CD4-positive, alpha-beta memory T cell (primary cell): ENCODE measurements at regions of chr22 and their contacts with region 1.

Region 1: DNA sequence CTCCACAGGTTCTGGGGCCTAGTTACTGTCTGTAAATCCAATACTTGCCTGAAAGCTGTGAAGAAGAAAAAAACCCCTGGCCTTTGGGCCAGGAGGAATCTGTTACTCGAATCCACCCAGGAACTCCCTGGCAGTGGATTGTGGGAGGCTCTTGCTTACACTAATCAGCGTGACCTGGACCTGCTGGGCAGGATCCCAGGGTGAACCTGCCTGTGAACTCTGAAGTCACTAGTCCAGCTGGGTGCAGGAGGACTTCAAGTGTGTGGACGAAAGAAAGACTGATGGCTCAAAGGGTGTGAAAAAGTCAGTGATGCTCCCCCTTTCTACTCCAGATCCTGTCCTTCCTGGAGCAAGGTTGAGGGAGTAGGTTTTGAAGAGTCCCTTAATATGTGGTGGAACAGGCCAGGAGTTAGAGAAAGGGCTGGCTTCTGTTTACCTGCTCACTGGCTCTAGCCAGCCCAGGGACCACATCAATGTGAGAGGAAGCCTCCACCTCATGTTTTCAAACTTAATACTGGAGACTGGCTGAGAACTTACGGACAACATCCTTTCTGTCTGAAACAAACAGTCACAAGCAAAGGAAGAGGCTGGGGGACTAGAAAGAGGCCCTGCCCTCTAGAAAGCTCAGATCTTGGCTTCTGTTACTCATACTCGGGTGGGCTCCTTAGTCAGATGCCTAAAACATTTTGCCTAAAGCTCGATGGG is 13.5 kb downstream of the PIK3IP1 start:
- DNase-seq: peak; percentile 64 to 76 (median 73)
- H3K4me3 ChIP-seq: peak overlapping the region in 1 of 2 donors; percentile 17
- H3K4me3 Mint-ChIP-seq: peak overlapping the region; percentile 38 to 84 (median 77)
- H3K27ac ChIP-seq: peak overlapping the region; percentile 43
- H3K27ac Mint-ChIP-seq: peak overlapping the region; percentile 94 to 99 (median 97)
- H3K4me1 ChIP-seq: peaks cover 87% of the 10 kb centered on the region
- H3K4me1 Mint-ChIP-seq: peaks cover 57 to 92% (median 73%) of the 10 kb centered on the region in 4 donors
- H3K27me3 ChIP-seq: no peaks in the 10 kb centered on the region
- H3K27me3 Mint-ChIP-seq: no peaks in the 10 kb centered on the region

Region 2: DNA sequence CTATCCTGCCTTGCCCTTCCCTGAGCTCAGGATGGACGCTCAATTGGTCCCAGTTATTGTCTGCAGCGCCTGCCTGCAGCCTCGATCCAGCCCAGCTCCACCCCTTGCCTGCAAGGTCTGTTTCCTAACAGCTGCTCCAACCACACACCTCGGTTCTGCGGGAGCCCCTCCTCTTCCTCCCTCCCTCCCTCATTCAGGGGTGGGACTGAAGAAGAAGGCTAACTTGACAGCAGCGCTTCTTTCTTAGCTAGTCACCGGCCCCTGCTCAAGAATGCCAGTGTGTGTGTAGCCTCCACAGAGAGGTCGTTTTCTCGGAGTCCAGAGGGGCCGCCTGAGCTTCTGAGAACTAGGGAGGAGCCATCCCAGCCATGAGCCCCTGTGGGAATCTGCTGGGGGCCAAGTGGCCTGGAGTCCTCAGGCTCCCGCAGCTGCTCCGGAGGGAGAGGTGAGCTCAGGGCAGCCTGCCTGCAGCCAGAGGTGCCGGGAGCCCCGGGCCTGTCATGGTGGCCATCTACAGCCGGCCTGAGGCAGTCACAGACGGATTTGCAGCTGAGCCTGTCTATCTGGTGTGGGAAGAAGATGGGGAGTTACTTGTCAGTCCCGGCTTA is 30.5 kb before region 1 on chr22:
- CTCF ChIA-PET with region 1: interaction called, 71 read pairs
- POLR2A ChIA-PET with region 1: interaction called, 26 read pairs
- intact Hi-C with region 1: no loop called
- DNase-seq: peak; percentile 61 to 81 (median 69)
- H3K4me3 ChIP-seq: no peak overlapping the region
- H3K4me3 Mint-ChIP-seq: peak overlapping the region; percentile 22 to 85 (median 78)
- H3K27ac ChIP-seq: no peak overlapping the region
- H3K27ac Mint-ChIP-seq: peak overlapping the region in 6 of 7 donors; percentile 61 to 87 (median 78)
- H3K4me1 ChIP-seq: peaks cover 42% of the 10 kb centered on the region
- H3K4me1 Mint-ChIP-seq: peaks cover 22 to 50% (median 27%) of the 10 kb centered on the region in 4 donors
- H3K27me3 ChIP-seq: no peaks in the 10 kb centered on the region
- H3K27me3 Mint-ChIP-seq: no peaks in the 10 kb centered on the region

Region 3: DNA sequence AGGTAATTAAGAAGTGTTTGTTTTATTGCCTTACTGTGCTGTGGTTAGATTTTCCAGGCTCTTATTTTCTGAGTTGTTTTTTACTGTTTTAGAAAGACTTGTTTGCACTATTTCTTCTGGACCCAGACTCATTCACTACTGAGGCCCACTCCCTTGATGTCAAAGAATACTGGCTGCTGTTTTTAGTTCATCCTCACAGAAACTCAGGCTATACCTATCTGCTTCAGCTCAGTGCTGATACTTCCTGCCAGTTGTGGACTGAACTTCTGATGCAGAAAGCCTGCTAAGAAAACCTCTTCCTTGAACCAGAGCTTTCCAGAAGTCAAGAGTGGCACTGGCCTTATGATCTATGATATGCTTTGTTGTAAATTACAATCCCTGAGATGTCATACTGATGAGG is 29.4 kb after region 1 on chr22:
- CTCF ChIA-PET with region 1: interaction called, 114 read pairs
- POLR2A ChIA-PET with region 1: interaction called, 1,203 read pairs
- intact Hi-C with region 1: loop called (anchors 1 kb)
- DNase-seq: no peak
- H3K4me3 ChIP-seq: no peak overlapping the region
- H3K4me3 Mint-ChIP-seq: peak overlapping the region in 6 of 8 donors; percentile 46 to 77 (median 57)
- H3K27ac ChIP-seq: no peak overlapping the region
- H3K27ac Mint-ChIP-seq: peak overlapping the region; percentile 5 to 83 (median 65)
- H3K4me1 ChIP-seq: peaks cover 44% of the 10 kb centered on the region
- H3K4me1 Mint-ChIP-seq: peaks cover 20 to 48% (median 35%) of the 10 kb centered on the region in 4 donors
- H3K27me3 ChIP-seq: no peaks in the 10 kb centered on the region
- H3K27me3 Mint-ChIP-seq: no peaks in the 10 kb centered on the region

Region 4: DNA sequence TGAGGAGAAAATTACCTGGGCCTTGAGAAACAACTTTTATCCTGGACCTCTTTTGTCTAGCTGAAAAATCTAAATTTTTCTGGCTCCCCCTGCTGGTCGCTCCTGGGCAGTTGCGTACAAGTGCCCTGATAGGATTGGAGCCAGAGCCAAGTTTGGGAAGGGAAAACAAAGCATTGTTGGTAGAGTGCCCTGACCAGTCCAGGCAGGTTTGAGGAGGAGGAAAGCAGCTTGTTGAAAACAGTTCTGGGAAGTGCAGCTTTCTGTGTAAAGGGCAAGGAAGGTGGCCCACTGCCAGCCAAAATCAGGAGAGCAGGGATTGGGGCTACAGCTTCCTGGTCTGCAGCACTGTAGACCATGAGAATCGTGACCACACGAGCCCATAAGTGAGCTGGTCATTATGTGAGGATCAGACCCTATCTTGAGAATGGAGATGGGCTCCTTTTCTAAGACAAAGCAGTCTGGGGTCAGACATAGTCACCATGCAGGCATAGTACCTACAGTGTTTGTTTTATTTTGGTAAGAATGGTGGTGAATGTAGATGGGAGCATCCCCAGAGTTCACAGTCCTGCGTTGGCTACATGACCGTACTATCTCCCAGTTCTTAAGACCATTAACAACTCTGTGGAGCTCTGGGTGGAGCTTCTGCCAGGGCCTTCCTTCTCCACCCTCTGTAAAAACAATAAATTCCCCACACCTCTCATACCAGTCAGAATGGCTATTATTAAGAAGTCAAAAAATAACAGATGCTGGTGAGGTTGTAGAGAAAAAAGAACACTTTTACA is 34.8 kb after region 1 on chr22:
- CTCF ChIA-PET with region 1: interaction called, 114 read pairs
- POLR2A ChIA-PET with region 1: interaction called, 76 read pairs
- intact Hi-C with region 1: loop called (anchors 1 kb)
- DNase-seq: peak; percentile 58 to 68 (median 60)
- H3K4me3 ChIP-seq: no peak overlapping the region
- H3K4me3 Mint-ChIP-seq: peak overlapping the region in 1 of 8 donors; percentile 10
- H3K27ac ChIP-seq: no peak overlapping the region
- H3K27ac Mint-ChIP-seq: peak overlapping the region in 5 of 7 donors; percentile 37 to 91 (median 78)
- H3K4me1 ChIP-seq: peaks cover 25% of the 10 kb centered on the region
- H3K4me1 Mint-ChIP-seq: peaks cover 6 to 20% (median 14%) of the 10 kb centered on the region in 4 donors
- H3K27me3 ChIP-seq: no peaks in the 10 kb centered on the region
- H3K27me3 Mint-ChIP-seq: no peaks in the 10 kb centered on the region

Region 5: DNA sequence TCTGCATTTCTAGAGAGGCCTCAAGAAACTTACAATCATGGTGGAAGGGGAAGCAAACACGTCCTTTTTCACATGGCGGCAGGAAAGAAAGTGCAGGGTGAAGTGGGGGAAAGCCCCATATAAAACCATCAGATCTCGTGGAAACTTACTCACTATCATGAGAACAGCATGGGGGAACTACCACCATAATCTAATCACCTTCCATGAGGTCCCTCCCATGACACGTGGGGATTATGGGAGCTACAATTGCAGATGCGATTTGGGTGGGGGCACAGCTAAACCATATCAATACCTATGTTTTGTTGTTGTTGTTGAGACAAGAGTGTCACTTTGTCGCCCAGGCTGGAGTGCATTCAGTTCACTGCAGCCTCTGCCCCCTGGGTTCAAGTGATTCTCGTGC is 247.5 kb after region 1 on chr22:
- CTCF ChIA-PET with region 1: no interaction called
- POLR2A ChIA-PET with region 1: no interaction called
- intact Hi-C with region 1: no loop called
- DNase-seq: peak in 1 of 5 donors; percentile 47
- H3K4me3 ChIP-seq: no peak overlapping the region
- H3K4me3 Mint-ChIP-seq: peak overlapping the region in 1 of 8 donors; percentile 19
- H3K27ac ChIP-seq: no peak overlapping the region
- H3K27ac Mint-ChIP-seq: peak overlapping the region; percentile 11 to 84 (median 55)
- H3K4me1 ChIP-seq: peaks cover 24% of the 10 kb centered on the region
- H3K4me1 Mint-ChIP-seq: peaks cover 26 to 46% (median 37%) of the 10 kb centered on the region in 4 donors
- H3K27me3 ChIP-seq: no peaks in the 10 kb centered on the region
- H3K27me3 Mint-ChIP-seq: no peaks in the 10 kb centered on the region